ENCODE measurements at regions of chr15 and their contacts with region 1.

Region 1: DNA sequence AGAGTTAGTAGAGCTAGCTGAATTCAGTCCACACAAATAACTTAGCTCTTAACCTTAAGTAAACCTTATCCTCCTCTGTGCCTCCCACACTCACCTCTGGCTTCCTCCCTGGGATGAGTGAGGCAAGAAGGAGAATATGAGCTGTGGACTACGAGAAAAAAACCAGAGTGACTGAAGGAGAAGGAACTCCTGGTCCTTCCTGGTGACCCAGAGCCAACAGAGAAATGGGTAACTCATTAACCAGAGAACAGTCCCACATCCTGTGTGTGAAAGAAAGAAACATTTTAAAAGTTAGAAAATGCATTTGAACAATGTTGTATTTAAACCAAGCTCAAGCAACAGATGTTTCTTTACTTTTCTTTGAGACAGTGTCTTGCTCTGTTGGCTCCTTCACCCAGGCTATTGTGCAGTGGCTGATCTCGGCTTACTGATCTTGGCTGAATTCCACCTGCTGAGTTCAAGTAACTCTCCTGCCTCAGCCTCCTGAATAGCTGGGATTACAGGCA is 27.5 kb upstream of the FAM81A start:
- DNase-seq: peak; percentile 64
- ATAC-seq: peak; percentile 4
- H3K4me3 ChIP-seq: peak overlapping the region; percentile 38
- H3K27ac ChIP-seq: peak overlapping the region; percentile 52
- H3K4me1 ChIP-seq: peaks cover 66% of the 10 kb centered on the region
- H3K27me3 ChIP-seq: no peaks in the 10 kb centered on the region
- CTCF ChIP-seq: no peak
- EP300 ChIP-seq: no peak
- POLR2A ChIP-seq: no peak
- RAD21 ChIP-seq: no peak

Region 2: GRCh38 chr15:58980351-58980939 is 430.0 kb before region 1 on chr15:
- CTCF ChIA-PET with region 1: interaction called, 24 read pairs
- POLR2A ChIA-PET with region 1: interaction called, 3 read pairs
- RAD21 ChIA-PET with region 1: interaction called, 14 read pairs
- SMC1A ChIA-PET with region 1: interaction called, 12 read pairs
- in situ Hi-C with region 1: no loop called
- intact Hi-C with region 1: loop called (anchors 10 kb)
- DNase-seq: no peak
- ATAC-seq: peak; percentile 39
- H3K4me3 ChIP-seq: peak overlapping the region; percentile 37
- H3K27ac ChIP-seq: peak overlapping the region; percentile 83; the same call in 1 of the 2 replicates
- H3K4me1 ChIP-seq: peaks cover 34% of the 10 kb centered on the region
- H3K27me3 ChIP-seq: no peaks in the 10 kb centered on the region
- CTCF ChIP-seq: peak; percentile 19 to 60 (median 43); a peak in 3 of 6 replicates
- EP300 ChIP-seq: no peak
- POLR2A ChIP-seq: no peak
- RAD21 ChIP-seq: peak; percentile 67

Region 3: GRCh38 chr15:59237119-59237855 is 173.2 kb before region 1 on chr15:
- CTCF ChIA-PET with region 1: interaction called, 11 read pairs
- POLR2A ChIA-PET with region 1: interaction called, 3 read pairs
- RAD21 ChIA-PET with region 1: interaction called, 28 read pairs
- SMC1A ChIA-PET with region 1: interaction called, 32 read pairs
- in situ Hi-C with region 1: loop called (anchors 5 kb)
- intact Hi-C with region 1: no loop called
- DNase-seq: peak; percentile 70
- ATAC-seq: peak; percentile 89
- H3K4me3 ChIP-seq: peak overlapping the region; percentile 35
- H3K27ac ChIP-seq: peak overlapping the region; percentile 78
- H3K4me1 ChIP-seq: peaks cover 11% of the 10 kb centered on the region
- H3K27me3 ChIP-seq: no peaks in the 10 kb centered on the region
- CTCF ChIP-seq: no peak
- EP300 ChIP-seq: peak; percentile 52 to 87; a peak in 2 of 4 replicates
- POLR2A ChIP-seq: no peak
- RAD21 ChIP-seq: no peak

Region 4: GRCh38 chr15:59313641-59314332 is 96.7 kb before region 1 on chr15:
- CTCF ChIA-PET with region 1: interaction called, 4 read pairs
- POLR2A ChIA-PET with region 1: no interaction called
- RAD21 ChIA-PET with region 1: interaction called, 6 read pairs
- SMC1A ChIA-PET with region 1: interaction called, 11 read pairs
- in situ Hi-C with region 1: no loop called
- intact Hi-C with region 1: no loop called
- DNase-seq: peak; percentile 81
- ATAC-seq: peak; percentile 96
- H3K4me3 ChIP-seq: no peak overlapping the region; the same call in 1 of the 2 replicates
- H3K27ac ChIP-seq: peak overlapping the region; percentile 81
- H3K4me1 ChIP-seq: peaks cover 67% of the 10 kb centered on the region
- H3K27me3 ChIP-seq: no peaks in the 10 kb centered on the region
- CTCF ChIP-seq: no peak
- EP300 ChIP-seq: peak; percentile 70 to 79; a peak in 2 of 4 replicates
- POLR2A ChIP-seq: 0 out of 2 replicates have a peak, but pooled peaks have one; percentile 31
- RAD21 ChIP-seq: no peak

Region 5: GRCh38 chr15:59384507-59384906 is 25.9 kb before region 1 on chr15:
- CTCF ChIA-PET with region 1: interaction called, 49 read pairs
- POLR2A ChIA-PET with region 1: no interaction called
- RAD21 ChIA-PET with region 1: interaction called, 65 read pairs
- SMC1A ChIA-PET with region 1: interaction called, 56 read pairs
- in situ Hi-C with region 1: no loop called
- intact Hi-C with region 1: no loop called
- DNase-seq: no peak
- ATAC-seq: peak; percentile 73
- H3K4me3 ChIP-seq: no peak overlapping the region
- H3K27ac ChIP-seq: no peak overlapping the region
- H3K4me1 ChIP-seq: peaks cover 15% of the 10 kb centered on the region
- H3K27me3 ChIP-seq: no peaks in the 10 kb centered on the region
- CTCF ChIP-seq: no peak
- EP300 ChIP-seq: no peak
- POLR2A ChIP-seq: no peak
- RAD21 ChIP-seq: no peak

Region 6: GRCh38 chr15:59484399-59484798 is 74.0 kb after region 1 on chr15:
- CTCF ChIA-PET with region 1: interaction called, 16 read pairs
- POLR2A ChIA-PET with region 1: interaction called, 8 read pairs
- RAD21 ChIA-PET with region 1: interaction called, 38 read pairs
- SMC1A ChIA-PET with region 1: interaction called, 30 read pairs
- in situ Hi-C with region 1: no loop called
- intact Hi-C with region 1: loop called (anchors 1 kb)
- DNase-seq: no peak
- ATAC-seq: no peak
- H3K4me3 ChIP-seq: no peak overlapping the region
- H3K27ac ChIP-seq: no peak overlapping the region
- H3K4me1 ChIP-seq: peaks cover 15% of the 10 kb centered on the region
- H3K27me3 ChIP-seq: no peaks in the 10 kb centered on the region
- CTCF ChIP-seq: no peak
- EP300 ChIP-seq: no peak
- POLR2A ChIP-seq: no peak
- RAD21 ChIP-seq: no peak